Tibial artery (tissue), 4 donors: ENCODE measurements at regions of chr19 and their contacts with region 1.

Region 1: DNA sequence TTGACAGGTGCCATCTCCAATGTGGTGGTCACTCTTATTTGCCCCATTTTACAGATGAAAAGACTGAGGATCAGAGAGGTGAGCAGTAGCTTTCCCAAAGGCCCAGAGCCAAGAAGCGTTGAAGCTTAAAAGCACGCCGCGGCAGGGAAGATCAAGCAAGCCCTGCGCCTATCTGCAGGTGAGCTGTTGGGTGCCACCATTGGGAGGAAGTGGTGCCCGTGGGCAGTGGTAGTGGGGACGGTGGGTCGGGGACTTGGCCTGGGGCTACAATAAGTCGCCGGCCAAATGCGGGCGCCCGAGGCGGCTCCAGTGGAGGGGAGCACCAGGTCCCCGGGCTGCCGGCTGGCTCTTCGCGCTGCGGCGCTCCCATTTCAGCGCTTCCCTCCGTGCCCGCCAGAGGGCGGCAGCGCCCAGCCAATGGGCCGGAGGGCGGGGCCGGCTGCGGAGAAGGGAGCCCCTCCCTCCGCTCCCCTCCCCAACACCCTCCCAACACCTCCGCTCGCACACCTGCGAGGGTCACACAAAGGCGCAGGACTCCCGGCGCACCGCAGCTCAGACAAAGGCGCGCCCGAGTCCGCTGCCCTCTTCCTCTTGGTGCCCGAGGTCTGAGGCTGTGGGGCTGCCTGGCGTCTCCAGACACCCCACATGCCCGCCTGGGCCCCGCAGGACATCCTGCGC is 744 bp upstream of the POU2F2 start:
- DNase-seq: peak; percentile 43 to 74
- H3K4me3 ChIP-seq: peak overlapping the region; percentile 16 to 32
- H3K27ac ChIP-seq: no peak overlapping the region
- H3K4me1 ChIP-seq: peaks cover 0 to 14% (median 12%) of the 10 kb centered on the region in 4 donors
- H3K27me3 ChIP-seq: peaks cover 0 to 65% of the 10 kb centered on the region in 2 donors
- CTCF ChIP-seq: peak; percentile 87 to 97

Region 2: DNA sequence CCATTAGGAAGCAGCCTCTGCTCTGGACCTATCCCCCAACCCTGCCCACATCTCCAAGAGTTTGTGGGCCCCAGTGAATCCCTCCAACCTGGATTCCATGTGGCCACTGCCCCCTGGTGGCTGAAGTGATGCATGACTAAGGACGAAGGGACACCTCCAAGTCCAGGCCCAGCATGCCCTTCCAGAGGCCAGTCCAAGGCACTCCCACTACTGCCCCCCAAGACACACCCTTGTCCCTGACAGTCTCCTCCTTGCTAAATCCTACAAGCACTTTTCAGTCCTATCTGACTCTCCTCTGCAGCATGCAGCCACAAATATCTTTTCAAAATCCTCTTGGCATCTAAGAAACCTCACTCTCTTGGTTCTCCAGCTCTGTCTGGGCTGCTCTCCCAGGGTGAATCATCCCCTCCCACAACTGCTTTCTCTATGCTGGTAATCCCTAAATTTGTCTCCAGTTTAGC is 51.4 kb after region 1 on chr19:
- intact Hi-C with region 1: loop called (anchors 5 kb)
- DNase-seq: peak; percentile 73 to 79
- H3K4me3 ChIP-seq: no peak overlapping the region
- H3K27ac ChIP-seq: no peak overlapping the region
- H3K4me1 ChIP-seq: no peaks in the 10 kb centered on the region
- H3K27me3 ChIP-seq: peaks cover 0 to 36% of the 10 kb centered on the region in 2 donors
- CTCF ChIP-seq: peak; percentile 81

Region 3: DNA sequence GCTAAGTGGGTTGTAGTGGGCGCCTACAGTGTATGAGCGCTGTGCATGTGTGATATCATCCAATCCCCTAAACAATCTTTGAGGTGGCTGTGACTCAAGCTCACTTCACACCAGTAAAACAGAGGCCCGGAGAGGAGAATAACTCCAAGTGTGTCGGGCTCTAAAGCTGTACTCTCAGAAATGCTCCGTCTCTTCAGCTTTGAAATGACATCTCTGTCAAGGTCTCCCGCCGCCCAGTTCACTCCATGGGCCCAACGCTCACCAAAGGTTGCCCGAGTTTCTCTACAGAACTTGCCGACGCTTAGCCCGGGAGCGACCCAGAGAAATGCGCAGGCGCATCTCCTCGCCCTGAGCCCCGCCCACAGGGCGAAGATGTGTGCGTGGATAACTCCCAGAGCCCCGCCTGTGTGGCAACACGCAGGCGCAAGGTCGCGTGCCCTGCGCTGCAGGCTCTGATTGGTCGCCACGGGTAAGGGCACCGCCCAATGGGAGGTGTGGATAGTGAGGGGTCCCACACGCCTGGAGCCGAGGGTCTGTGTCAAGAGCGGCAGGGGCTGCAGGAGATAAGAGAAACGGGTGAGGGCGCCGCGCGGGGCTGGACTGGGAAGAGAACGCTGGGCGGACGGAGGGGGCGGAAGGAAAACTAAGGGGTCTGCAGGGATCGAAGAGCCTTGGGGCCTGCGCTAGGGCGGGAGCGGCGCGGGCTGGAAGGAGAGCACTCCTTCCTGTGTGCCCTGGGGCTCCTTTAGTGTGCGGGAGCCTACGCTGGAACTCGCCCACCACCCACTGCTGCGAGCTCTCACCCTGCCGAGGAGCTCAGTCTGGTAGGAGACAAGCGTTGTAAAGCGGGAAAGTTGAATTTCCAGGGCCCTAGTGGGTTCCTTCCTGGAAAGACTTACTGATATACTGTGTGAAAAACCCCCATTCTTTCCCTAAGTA is 87.1 kb after region 1 on chr19 and contains the start of gene ZNF526:
- intact Hi-C with region 1: no loop called
- DNase-seq: peak; percentile 98
- H3K4me3 ChIP-seq: peak within 1 kb of the TSS; percentile 85 to 86
- H3K27ac ChIP-seq: peak within 1 kb of the TSS; percentile 79 to 88
- H3K4me1 ChIP-seq: peaks cover 0 to 54% (median 41%) of the 10 kb centered on the region in 4 donors
- H3K27me3 ChIP-seq: no peaks in the 10 kb centered on the region
- CTCF ChIP-seq: no peak

Region 4: GRCh38 chr19:42295831-42296525 is 163.0 kb after region 1 on chr19:
- intact Hi-C with region 1: loop called (anchors 10 kb)
- DNase-seq: peak; percentile 88 to 90
- H3K4me3 ChIP-seq: no peak overlapping the region
- H3K27ac ChIP-seq: no peak overlapping the region
- H3K4me1 ChIP-seq: peaks cover 0 to 3% (median 0%) of the 10 kb centered on the region in 4 donors
- H3K27me3 ChIP-seq: no peaks in the 10 kb centered on the region
- CTCF ChIP-seq: peak; percentile 94 to 97

Region 5: GRCh38 chr19:42325273-42325895 is 192.4 kb after region 1 on chr19 and contains the start of gene MEGF8:
- intact Hi-C with region 1: loop called (anchors 10 kb)
- DNase-seq: peak; percentile 96 to 99
- H3K4me3 ChIP-seq: peak within 1 kb of the TSS; percentile 78 to 84
- H3K27ac ChIP-seq: peak within 1 kb of the TSS; percentile 70 to 72
- H3K4me1 ChIP-seq: peaks cover 0 to 43% (median 31%) of the 10 kb centered on the region in 4 donors
- H3K27me3 ChIP-seq: peaks cover 11 to 35% of the 10 kb centered on the region in 2 donors
- CTCF ChIP-seq: peak; percentile 74 to 76

Region 6: GRCh38 chr19:42563352-42564210 is 430.6 kb after region 1 on chr19:
- intact Hi-C with region 1: no loop called
- DNase-seq: no peak
- H3K4me3 ChIP-seq: no peak overlapping the region
- H3K27ac ChIP-seq: no peak overlapping the region
- H3K4me1 ChIP-seq: peaks cover 0 to 14% (median 0%) of the 10 kb centered on the region in 4 donors
- H3K27me3 ChIP-seq: peaks cover 0 to 19% of the 10 kb centered on the region in 2 donors
- CTCF ChIP-seq: peak; percentile 48 to 51